ENCODE measurements at regions of chr21 and their contacts with region 1.

Region 1: DNA sequence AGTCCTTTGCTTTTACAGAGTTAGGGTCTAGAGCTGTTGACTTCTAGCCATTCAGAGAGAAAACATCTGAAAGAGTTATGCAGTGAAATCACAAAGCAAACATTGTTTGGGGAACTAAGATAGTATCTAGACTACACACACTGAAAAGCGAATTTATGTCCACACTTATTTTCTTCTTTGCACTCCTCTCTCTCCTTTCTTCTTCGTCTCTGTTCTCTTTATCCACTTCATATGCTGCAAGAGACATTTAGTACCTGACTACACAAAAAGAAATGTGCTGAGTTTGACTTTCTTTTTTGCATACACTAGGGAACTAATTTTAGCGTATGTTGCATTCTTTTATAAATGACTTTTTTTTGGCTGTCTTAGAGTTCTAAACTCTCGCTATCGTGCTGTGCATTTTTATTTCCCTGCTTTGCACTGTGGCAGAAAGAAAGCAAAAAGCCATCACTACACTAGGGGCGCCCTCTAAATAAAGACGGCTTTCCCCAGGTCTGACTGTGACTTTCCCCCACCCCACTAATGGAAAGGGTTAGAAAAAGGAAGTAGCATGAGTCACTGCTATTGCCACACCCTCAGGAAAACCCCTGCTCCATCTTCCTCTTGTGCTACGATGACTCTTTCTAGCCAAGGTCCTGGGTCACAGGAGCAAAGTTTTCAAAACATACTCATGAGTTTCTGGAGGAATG is 65.7 kb downstream of the MAP3K7CL start:
- H3K4me3 Mint-ChIP-seq: peak overlapping the region; percentile 77
- H3K27ac Mint-ChIP-seq: peak overlapping the region; percentile 95
- H3K4me1 Mint-ChIP-seq: peaks cover 47% of the 10 kb centered on the region
- H3K27me3 Mint-ChIP-seq: no peaks in the 10 kb centered on the region

Region 2: DNA sequence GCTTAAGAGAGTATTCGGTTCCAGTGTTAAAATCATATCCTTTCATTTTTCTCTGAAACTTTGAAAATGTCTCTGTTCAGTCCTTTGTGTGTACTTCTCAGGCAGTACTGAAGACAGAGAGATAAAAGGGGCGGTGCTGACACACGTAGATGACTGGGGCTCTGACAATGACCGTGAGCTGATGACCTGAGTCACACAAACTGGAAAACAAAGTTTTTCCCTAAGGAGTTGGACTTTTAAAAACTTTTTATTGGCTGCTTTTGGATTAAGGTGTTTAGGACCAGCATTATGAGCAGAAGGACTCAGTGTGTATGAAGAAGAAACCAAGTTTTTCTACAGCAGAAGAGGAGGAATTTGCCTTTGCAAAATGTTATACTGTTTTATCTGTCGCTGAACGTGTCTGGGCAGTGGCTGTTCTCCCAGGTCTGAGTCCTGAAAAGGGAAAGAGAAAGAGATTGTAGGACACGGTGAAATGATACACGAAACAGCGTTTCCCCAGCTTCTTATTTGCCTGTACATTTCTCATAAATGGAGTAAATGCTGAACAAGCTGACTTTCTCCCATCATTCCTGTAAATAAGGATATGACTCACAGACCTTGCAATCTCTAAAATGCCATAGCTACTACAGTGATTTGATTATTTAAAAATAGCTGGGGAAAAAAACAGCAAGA is 14.2 kb before region 1 on chr21:
- intact Hi-C with region 1: loop called (anchors 1 kb)
- H3K4me3 Mint-ChIP-seq: no peak overlapping the region
- H3K27ac Mint-ChIP-seq: peak overlapping the region; percentile 39
- H3K4me1 Mint-ChIP-seq: peaks cover 67% of the 10 kb centered on the region
- H3K27me3 Mint-ChIP-seq: peaks cover 5% of the 10 kb centered on the region

Region 3: GRCh38 chr21:29232601-29233546 is 36.7 kb after region 1 on chr21:
- intact Hi-C with region 1: loop called (anchors 5 kb)
- H3K4me3 Mint-ChIP-seq: peak overlapping the region; percentile 15
- H3K27ac Mint-ChIP-seq: peak overlapping the region; percentile 70
- H3K4me1 Mint-ChIP-seq: peaks cover 79% of the 10 kb centered on the region
- H3K27me3 Mint-ChIP-seq: no peaks in the 10 kb centered on the region